Endothelial cell of umbilical vein (primary cell): ENCODE measurements at regions of chr14 and their contacts with region 1.

Region 1: DNA sequence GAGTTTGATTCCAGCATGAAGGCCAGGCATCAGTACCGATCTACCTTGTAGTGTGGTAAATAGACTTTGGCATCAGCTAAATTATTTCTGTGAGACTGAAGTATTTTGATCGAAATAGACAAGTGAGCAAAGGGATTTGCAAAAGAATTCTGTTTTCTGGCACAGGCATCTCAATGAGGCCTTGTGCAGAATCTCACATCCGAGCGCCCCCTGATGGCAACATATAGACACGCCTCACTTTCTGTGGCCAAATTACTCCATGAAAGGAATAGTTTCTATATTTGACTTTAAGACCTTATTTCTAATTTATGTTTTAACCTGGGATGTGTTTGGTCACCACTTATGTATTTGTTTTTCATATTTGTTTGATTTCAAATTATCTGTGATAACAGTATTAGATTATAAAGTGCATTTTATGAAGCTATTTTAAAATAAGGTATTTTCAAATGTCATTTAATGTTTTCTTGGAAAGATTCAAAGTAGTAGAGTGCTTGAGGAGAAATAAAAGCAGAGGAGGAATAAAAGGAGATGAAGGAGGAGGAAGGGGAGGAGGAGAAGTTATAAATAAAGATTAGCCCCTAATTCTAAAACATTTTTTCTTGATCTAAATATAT is 731.9 kb downstream of the NRXN3 start:
- DNase-seq: peak; percentile 44
- H3K4me3 ChIP-seq: no peak overlapping the region
- H3K27ac ChIP-seq: no peak overlapping the region
- H3K4me1 ChIP-seq: no peaks in the 10 kb centered on the region
- H3K27me3 ChIP-seq: peaks cover 6 to 20% of the 10 kb centered on the region in 2 experiments
- CTCF ChIP-seq: peak; percentile 77
- POLR2A ChIP-seq: no peak

Region 2: DNA sequence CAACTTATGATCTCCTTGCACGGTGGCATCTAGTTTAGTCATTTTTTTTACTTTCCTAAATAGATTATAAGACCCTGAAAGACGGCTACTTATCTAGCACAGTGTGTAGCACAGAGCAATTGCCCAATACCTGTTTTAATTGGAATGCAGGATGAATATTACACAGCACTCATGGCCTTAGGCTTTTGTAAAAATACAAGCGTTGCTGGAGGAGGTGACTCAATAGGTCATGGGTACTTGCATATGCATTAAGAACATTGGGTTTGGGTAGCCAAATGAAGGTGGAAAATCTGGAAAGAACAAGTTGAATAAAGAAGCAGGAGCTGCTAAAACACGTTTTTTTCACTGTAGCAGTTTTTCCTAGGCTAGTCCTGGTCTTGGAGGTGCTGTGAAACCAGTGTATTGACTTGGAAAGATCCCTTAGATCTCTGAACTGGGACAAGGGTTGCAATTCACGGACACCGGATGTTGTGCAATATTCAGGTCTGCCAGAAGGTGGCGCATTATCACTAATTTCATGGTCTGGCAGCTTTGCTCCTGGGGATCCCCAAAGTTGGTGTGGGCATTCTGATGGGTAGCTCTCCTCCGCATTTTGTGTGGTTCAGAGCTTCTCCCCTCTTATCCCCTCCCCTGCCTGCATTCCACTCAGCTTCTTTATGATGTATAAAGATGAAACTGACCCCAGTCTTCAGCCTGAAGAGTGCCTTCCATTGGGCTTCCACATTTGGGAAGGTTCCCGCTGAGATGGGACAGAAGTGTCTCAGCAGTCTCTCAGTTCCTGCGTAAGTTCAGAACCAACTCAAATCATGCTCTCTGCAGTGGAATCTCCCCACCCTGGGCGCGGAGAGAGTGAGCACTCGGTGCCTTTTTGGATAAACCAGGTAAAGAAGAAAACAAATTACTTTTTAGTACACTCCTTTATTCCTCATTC is 453.7 kb before region 1 on chr14:
- CTCF ChIA-PET with region 1: no interaction called
- POLR2A ChIA-PET with region 1: no interaction called
- dilution Hi-C with region 1: no loop called
- intact Hi-C with region 1: loop called (anchors 5 kb)
- DNase-seq: peak; percentile 47
- H3K4me3 ChIP-seq: no peak overlapping the region
- H3K27ac ChIP-seq: no peak overlapping the region
- H3K4me1 ChIP-seq: no peaks in the 10 kb centered on the region
- H3K27me3 ChIP-seq: no peaks in the 10 kb centered on the region
- CTCF ChIP-seq: peak; percentile 63 to 66
- POLR2A ChIP-seq: no peak

Region 3: DNA sequence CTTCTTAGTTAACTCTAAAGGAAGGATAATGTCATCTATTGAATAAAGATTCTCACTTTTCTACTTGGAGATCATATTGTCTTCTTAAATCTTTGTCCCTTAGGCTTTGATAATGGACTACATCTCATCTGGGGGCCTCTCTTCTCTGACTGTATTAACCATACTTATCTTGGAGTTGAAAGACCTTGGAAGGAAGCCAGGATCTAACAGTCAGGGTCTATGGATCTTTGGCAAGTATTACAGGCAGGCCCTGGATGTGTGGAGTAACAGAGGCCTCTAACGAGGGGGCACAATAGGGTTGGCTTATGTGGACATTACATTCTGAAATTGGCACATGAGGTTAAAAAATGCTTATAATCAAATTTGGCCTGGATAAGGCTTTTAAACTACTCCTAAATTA is 218.1 kb before region 1 on chr14:
- CTCF ChIA-PET with region 1: no interaction called
- POLR2A ChIA-PET with region 1: no interaction called
- dilution Hi-C with region 1: no loop called
- intact Hi-C with region 1: no loop called
- DNase-seq: no peak
- H3K4me3 ChIP-seq: no peak overlapping the region
- H3K27ac ChIP-seq: no peak overlapping the region
- H3K4me1 ChIP-seq: no peaks in the 10 kb centered on the region
- H3K27me3 ChIP-seq: no peaks in the 10 kb centered on the region
- CTCF ChIP-seq: no peak
- POLR2A ChIP-seq: no peak

Region 4: DNA sequence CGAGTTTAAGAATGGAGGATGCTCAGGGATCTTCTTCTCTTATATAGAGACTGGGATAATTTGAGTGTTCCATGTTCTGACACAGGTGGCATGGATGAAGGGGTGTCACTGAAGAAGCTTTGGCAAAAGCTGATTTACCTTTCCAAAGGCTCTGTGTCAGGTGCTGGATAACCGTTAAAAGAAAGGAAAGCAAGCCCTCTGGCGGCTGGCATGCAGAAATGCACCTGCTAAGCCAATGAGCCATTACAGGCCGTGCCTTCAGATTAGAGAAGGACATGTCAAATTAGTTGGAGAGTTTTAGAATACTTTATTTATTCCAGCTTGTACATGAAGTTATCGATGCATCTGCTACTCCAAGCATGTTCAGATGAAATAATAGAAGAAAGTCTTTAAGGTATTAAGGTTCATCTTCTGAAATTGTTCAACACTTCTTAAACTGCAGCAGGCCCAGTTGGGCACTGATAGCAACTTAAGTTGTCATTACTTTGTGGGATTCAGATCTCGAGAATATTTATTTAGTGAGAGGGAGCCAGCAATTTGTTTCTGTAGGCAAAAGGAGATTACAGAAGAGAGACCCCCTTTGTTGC is 53.8 kb before region 1 on chr14:
- CTCF ChIA-PET with region 1: interaction called, 4 read pairs
- POLR2A ChIA-PET with region 1: no interaction called
- dilution Hi-C with region 1: no loop called
- intact Hi-C with region 1: loop called (anchors 2 kb)
- DNase-seq: peak; percentile 35
- H3K4me3 ChIP-seq: no peak overlapping the region
- H3K27ac ChIP-seq: no peak overlapping the region
- H3K4me1 ChIP-seq: no peaks in the 10 kb centered on the region
- H3K27me3 ChIP-seq: no peaks in the 10 kb centered on the region
- CTCF ChIP-seq: peak; percentile 77 to 80
- POLR2A ChIP-seq: no peak

Region 5: DNA sequence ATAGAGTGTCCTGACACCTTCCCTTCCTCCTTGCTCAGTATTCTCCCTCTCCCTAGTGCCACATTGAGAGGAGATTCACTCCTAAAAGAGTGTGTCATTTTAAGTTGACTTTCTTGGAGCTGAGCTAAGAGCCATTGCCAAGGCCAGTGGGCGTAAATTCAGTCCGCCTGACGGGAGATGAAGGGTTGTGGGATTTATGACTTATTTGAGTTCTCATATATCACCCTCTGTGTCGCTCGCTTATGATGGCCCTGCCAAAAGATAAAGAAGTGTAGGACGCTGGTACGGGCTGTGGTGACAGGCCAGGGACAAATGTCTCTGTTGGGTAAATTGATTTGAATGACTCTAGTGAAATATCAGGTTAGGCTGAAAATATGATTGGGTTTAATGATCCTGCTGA is 135.5 kb after region 1 on chr14:
- CTCF ChIA-PET with region 1: no interaction called
- POLR2A ChIA-PET with region 1: no interaction called
- dilution Hi-C with region 1: no loop called
- intact Hi-C with region 1: no loop called
- DNase-seq: no peak
- H3K4me3 ChIP-seq: no peak overlapping the region
- H3K27ac ChIP-seq: no peak overlapping the region
- H3K4me1 ChIP-seq: no peaks in the 10 kb centered on the region
- H3K27me3 ChIP-seq: no peaks in the 10 kb centered on the region
- CTCF ChIP-seq: no peak
- POLR2A ChIP-seq: no peak

Region 6: GRCh38 chr14:79074510-79074909 is 172.4 kb after region 1 on chr14:
- CTCF ChIA-PET with region 1: no interaction called
- POLR2A ChIA-PET with region 1: no interaction called
- dilution Hi-C with region 1: no loop called
- intact Hi-C with region 1: no loop called
- DNase-seq: no peak
- H3K4me3 ChIP-seq: no peak overlapping the region
- H3K27ac ChIP-seq: no peak overlapping the region
- H3K4me1 ChIP-seq: no peaks in the 10 kb centered on the region
- H3K27me3 ChIP-seq: no peaks in the 10 kb centered on the region
- CTCF ChIP-seq: no peak
- POLR2A ChIP-seq: no peak